Activated CD8-positive, alpha-beta T cell treated with anti-CD3 and anti-CD28 coated beads for 36 hours (primary cell): ENCODE measurements at regions of chr16 and their contacts with region 1.

Region 1: DNA sequence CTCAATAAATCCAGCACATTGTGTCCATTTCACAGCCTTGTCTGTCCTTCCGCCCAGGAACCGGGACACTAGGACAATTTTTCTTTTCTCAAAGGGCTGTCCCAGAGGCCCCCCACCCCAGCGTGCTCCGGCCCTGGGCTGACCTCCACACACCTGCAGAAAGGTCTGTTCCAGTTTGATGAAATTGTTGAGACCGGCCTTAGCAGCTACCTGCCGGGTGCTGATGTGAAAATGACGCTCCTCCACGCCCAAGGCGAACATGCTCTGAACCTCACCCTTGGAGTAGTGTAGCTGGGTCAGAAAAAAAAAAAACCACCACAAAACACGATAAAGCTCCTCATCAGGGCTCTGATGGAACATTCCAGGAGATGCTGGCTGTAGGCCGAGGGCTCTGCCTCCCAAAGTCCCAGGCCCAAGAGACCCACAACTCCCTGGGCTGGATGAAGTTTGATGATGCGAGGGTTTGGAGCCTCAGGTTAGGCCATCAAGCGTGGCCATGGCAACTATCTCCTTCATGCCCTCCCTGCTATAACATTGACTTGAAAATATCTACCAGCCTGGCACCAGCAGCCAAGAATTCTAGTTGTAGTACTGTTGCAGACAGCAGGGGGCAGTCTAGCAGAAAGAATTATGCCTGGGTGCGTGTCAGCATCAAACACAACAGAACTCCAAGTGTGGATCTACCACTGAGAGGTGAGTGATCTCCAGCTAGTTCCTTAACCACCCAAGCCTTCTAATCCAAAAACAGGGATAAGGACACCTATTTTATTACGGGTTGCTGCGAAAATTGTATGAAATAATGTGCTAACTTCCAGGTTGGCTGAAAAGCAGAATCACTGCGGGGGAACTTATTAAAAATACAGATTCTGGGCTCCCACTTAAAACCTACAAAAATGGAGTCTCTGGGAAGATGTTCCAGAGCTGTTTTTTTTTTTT is 62.1 kb downstream of the RMI2 start:
- DNase-seq: peak; percentile 80
- ATAC-seq: peak; percentile 59
- H3K4me3 Mint-ChIP-seq: no peak overlapping the region
- H3K27ac Mint-ChIP-seq: no peak overlapping the region
- H3K4me1 Mint-ChIP-seq: no peaks in the 10 kb centered on the region
- H3K27me3 Mint-ChIP-seq: no peaks in the 10 kb centered on the region
- CTCF ChIP-seq: peak; percentile 85

Region 2: DNA sequence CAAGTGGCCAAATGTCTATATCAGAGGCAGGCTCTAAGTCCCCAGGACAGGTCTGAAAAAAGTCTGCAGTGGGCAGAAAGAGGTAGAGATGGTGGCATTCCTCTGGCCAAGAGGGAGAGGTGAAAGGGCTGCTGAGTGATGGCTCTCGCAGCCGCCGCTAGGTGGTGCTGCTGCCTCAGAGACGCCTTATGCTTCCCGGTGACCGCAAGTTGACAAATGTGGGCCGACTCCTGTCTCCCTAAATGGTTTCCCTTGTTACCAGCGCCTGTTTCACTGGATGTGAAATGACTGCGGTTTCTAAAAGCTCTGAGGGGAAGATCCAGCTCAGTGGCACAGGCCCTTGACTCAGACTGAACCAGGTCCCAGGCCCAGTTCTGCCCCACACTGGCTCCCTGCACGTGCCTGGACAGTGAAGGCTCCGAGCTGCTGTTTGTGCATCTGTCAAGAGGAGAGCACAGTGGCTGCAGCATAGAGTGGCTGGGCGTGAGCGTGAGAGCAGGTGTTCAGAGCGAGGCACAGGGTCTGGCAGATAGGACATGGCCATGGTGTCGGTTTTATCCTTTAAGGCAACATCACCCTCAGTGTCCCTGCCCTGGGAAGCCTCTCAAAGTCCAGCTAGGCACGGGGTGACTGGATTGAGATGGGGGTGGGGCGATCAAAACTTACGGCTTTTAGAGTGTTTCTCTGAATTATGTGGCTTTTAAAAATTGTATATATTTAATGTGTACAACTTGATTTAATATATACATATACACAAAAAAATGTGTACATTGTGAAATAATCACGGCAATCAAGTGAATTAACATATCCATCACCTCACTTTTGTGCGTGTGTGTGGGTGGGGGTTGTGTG is 443.1 kb before region 1 on chr16:
- CTCF ChIA-PET with region 1: interaction called, 65 read pairs
- POLR2A ChIA-PET with region 1: no interaction called
- intact Hi-C with region 1: no loop called
- DNase-seq: peak; percentile 85
- ATAC-seq: peak; percentile 47
- H3K4me3 Mint-ChIP-seq: no peak overlapping the region
- H3K27ac Mint-ChIP-seq: peak overlapping the region; percentile 92
- H3K4me1 Mint-ChIP-seq: peaks cover 42% of the 10 kb centered on the region
- H3K27me3 Mint-ChIP-seq: no peaks in the 10 kb centered on the region
- CTCF ChIP-seq: peak; percentile 99

Region 3: GRCh38 chr16:11417487-11417886 is 10.2 kb after region 1 on chr16:
- CTCF ChIA-PET with region 1: interaction called, 10 read pairs
- POLR2A ChIA-PET with region 1: no interaction called
- intact Hi-C with region 1: no loop called
- DNase-seq: no peak
- ATAC-seq: no peak
- H3K4me3 Mint-ChIP-seq: no peak overlapping the region
- H3K27ac Mint-ChIP-seq: no peak overlapping the region
- H3K4me1 Mint-ChIP-seq: no peaks in the 10 kb centered on the region
- H3K27me3 Mint-ChIP-seq: no peaks in the 10 kb centered on the region
- CTCF ChIP-seq: no peak

Region 4: GRCh38 chr16:11526655-11527350 is 119.5 kb after region 1 on chr16:
- CTCF ChIA-PET with region 1: interaction called, 25 read pairs
- POLR2A ChIA-PET with region 1: no interaction called
- intact Hi-C with region 1: loop called (anchors 10 kb)
- DNase-seq: no peak
- ATAC-seq: no peak
- H3K4me3 Mint-ChIP-seq: no peak overlapping the region
- H3K27ac Mint-ChIP-seq: no peak overlapping the region
- H3K4me1 Mint-ChIP-seq: no peaks in the 10 kb centered on the region
- H3K27me3 Mint-ChIP-seq: no peaks in the 10 kb centered on the region
- CTCF ChIP-seq: no peak

Region 5: GRCh38 chr16:11715246-11715947 is 308.1 kb after region 1 on chr16:
- CTCF ChIA-PET with region 1: interaction called, 54 read pairs
- POLR2A ChIA-PET with region 1: no interaction called
- intact Hi-C with region 1: no loop called
- DNase-seq: no peak
- ATAC-seq: no peak
- H3K4me3 Mint-ChIP-seq: no peak overlapping the region
- H3K27ac Mint-ChIP-seq: no peak overlapping the region
- H3K4me1 Mint-ChIP-seq: peaks cover 18% of the 10 kb centered on the region
- H3K27me3 Mint-ChIP-seq: no peaks in the 10 kb centered on the region
- CTCF ChIP-seq: no peak

Region 6: DNA sequence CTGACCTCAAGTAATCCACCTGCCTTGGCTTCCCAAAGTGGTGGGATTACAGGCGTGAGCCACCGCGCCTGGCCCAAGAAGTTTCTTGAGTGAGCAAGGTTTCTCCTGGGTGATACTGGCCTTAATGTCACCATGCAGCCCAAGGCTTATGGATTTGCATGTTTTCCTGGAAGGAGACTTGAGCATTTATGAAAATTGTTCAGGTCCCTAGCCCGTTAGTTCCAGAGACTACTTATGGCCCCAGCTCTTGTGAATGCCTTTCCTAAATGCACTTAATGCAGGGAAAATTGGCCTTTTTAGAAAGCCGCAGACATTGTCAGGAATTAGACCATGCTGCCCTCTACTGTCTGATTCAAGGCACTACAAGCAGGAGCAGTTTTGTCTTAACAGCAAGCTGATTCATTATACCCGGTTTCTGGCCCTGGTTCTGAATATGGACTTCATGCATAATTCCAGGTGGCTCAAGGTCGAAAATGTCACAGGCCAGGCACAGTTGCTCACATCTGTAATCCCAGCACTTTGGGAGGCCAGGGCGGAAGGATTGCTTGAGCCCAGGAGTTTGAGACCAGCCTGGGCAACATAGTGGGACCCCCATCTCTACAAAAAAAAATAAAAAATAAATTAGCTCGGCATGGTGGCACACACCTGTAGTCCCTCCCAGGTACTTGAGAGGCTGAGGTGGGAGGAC is 660.5 kb after region 1 on chr16:
- CTCF ChIA-PET with region 1: interaction called, 12 read pairs
- POLR2A ChIA-PET with region 1: no interaction called
- intact Hi-C with region 1: no loop called
- DNase-seq: peak; percentile 53
- ATAC-seq: peak; percentile 87
- H3K4me3 Mint-ChIP-seq: no peak overlapping the region
- H3K27ac Mint-ChIP-seq: no peak overlapping the region
- H3K4me1 Mint-ChIP-seq: no peaks in the 10 kb centered on the region
- H3K27me3 Mint-ChIP-seq: no peaks in the 10 kb centered on the region
- CTCF ChIP-seq: peak; percentile 96